ENCODE measurements at regions of chr1 and their contacts with region 1.

Region 1: GRCh38 chr1:23019094-23019862 is at the start of gene KDM1A:
- DNase-seq: peak; percentile 95
- H3K4me3 Mint-ChIP-seq: peak within 1 kb of the TSS; percentile 88
- H3K27ac Mint-ChIP-seq: peak within 1 kb of the TSS; percentile 77
- H3K4me1 Mint-ChIP-seq: peaks cover 38% of the 10 kb centered on the region
- H3K27me3 Mint-ChIP-seq: no peaks in the 10 kb centered on the region
- total RNA-seq, gene KDM1A: 50.6 to 51.6 TPM

Region 2: DNA sequence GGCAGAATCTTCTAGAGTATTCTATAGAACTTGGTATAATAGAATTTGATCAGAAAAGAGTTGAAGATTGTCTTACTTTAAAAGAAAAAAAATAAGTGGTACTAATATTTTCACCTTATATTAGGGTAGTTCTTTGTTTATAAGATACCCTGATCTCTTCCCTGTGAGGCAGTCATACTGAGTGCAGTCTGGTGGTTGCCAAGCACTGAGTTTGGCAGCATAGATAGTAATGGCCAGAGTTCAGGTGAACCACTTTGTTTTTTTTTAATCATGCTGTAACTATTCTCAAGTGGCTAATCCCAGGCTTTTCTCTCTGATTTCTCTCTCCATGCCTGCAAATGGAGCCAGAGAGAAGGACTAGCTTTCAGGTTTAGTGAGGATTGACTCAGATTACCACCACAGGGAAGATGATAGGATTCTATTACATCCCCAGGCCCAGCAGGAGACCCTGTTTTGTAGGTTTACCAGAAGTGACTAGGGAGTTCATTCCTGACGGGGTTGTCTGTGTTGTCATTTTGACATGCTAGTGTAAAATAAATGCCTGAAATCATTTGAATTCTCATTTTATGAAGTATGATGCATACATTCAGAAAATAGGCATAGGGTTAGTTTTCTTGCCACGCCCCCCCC is 16.7 kb after region 1 on chr1:
- CTCF ChIA-PET with region 1: interaction called, 5 read pairs
- POLR2A ChIA-PET with region 1: interaction called, 13 read pairs
- DNase-seq: no peak
- H3K4me3 Mint-ChIP-seq: no peak overlapping the region
- H3K27ac Mint-ChIP-seq: no peak overlapping the region
- H3K4me1 Mint-ChIP-seq: peaks cover 20% of the 10 kb centered on the region
- H3K27me3 Mint-ChIP-seq: no peaks in the 10 kb centered on the region